ENCODE measurements at regions of chr5 and their contacts with region 1.

Region 1: GRCh38 chr5:159331093-159331973 is 1.0 kb upstream of the IL12B start:
- DNase-seq: no peak
- ATAC-seq: peak; percentile 95
- H3K4me3 ChIP-seq: peak overlapping the region; percentile 14 to 57 (median 36); a peak in 4 of 6 replicates
- H3K27ac ChIP-seq: no peak overlapping the region
- H3K4me1 ChIP-seq: 0 out of 2 replicates have a peak, but pooled peaks cover 4% of the 10 kb centered on the region
- H3K27me3 ChIP-seq: peaks cover 0 to 12% of the 10 kb centered on the region in 2 experiments; a peak in 2 of 5 replicates
- CTCF ChIP-seq: peak; percentile 81
- EP300 ChIP-seq: no peak
- POLR2A ChIP-seq: no peak
- RAD21 ChIP-seq: no peak

Region 2: DNA sequence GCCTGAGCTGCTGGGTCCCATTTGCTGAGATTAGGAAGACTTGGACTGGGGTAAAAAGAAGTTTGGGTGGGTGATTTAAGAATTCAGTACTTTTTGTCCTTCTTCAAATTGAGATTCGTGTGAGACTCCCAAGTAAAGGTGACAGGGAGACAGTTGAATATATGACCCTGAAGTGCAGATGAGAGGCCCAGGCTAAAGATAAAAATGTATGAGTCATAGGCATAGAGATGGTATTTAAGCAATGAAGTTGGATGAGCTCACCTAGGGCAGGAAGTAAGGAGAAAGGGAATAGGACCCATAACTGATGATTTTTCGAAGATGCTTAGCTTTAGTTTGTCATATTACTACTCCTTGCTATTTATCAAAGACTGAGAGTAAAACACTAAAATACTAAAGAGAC is 329.1 kb after region 1 on chr5:
- CTCF ChIA-PET with region 1: no interaction called
- POLR2A ChIA-PET with region 1: no interaction called
- in situ Hi-C with region 1: no loop called
- intact Hi-C with region 1: loop called (anchors 5 kb)
- DNase-seq: no peak
- ATAC-seq: no peak
- H3K4me3 ChIP-seq: no peak overlapping the region
- H3K27ac ChIP-seq: no peak overlapping the region
- H3K4me1 ChIP-seq: no peaks in the 10 kb centered on the region
- H3K27me3 ChIP-seq: no peaks in the 10 kb centered on the region; a peak in 1 of 5 replicates
- CTCF ChIP-seq: no peak
- EP300 ChIP-seq: no peak
- POLR2A ChIP-seq: no peak
- RAD21 ChIP-seq: no peak